Heart left ventricle (tissue), 16 donors: ENCODE measurements at regions of chr5 and their contacts with region 1.

Region 1: DNA sequence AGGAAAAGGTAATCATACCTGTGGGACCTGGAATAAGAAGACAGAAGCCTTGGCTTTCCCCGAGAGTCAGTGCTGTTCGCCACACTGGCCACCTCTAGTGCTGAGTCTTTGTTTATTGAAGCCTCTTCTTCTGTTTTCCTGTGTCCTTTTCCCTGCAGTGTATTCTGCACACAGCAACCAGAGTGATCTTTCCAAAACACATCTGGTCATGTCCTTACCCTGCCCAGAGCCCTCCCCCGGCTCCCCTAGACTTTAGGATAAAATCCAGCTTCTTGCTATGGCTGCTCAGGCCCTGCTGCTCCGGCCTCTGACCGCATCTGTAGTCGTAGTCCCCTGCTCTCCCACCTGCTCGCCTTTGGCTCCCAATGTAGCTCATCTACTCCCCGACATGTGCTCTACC is 28.3 kb downstream of the GALNT10 start:
- DNase-seq: no peak
- ATAC-seq: no peak
- H3K4me3 ChIP-seq: no peak overlapping the region
- H3K27ac ChIP-seq: no peak overlapping the region
- H3K4me1 ChIP-seq: peaks cover 0 to 49% (median 10%) of the 10 kb centered on the region in 12 donors
- H3K27me3 ChIP-seq: no peaks in the 10 kb centered on the region
- CTCF ChIP-seq: no peak
- POLR2A ChIP-seq: no peak

Region 2: GRCh38 chr5:154240595-154240994 is 21.8 kb after region 1 on chr5:
- intact Hi-C with region 1: loop called in 1 of 10 experiments (anchors 1 kb)
- DNase-seq: no peak
- ATAC-seq: no peak
- H3K4me3 ChIP-seq: no peak overlapping the region
- H3K27ac ChIP-seq: no peak overlapping the region
- H3K4me1 ChIP-seq: peaks cover 0 to 25% (median 16%) of the 10 kb centered on the region in 12 donors
- H3K27me3 ChIP-seq: no peaks in the 10 kb centered on the region
- CTCF ChIP-seq: no peak
- POLR2A ChIP-seq: no peak